ENCODE measurements at regions of chr18 and their contacts with region 1.

Region 1: DNA sequence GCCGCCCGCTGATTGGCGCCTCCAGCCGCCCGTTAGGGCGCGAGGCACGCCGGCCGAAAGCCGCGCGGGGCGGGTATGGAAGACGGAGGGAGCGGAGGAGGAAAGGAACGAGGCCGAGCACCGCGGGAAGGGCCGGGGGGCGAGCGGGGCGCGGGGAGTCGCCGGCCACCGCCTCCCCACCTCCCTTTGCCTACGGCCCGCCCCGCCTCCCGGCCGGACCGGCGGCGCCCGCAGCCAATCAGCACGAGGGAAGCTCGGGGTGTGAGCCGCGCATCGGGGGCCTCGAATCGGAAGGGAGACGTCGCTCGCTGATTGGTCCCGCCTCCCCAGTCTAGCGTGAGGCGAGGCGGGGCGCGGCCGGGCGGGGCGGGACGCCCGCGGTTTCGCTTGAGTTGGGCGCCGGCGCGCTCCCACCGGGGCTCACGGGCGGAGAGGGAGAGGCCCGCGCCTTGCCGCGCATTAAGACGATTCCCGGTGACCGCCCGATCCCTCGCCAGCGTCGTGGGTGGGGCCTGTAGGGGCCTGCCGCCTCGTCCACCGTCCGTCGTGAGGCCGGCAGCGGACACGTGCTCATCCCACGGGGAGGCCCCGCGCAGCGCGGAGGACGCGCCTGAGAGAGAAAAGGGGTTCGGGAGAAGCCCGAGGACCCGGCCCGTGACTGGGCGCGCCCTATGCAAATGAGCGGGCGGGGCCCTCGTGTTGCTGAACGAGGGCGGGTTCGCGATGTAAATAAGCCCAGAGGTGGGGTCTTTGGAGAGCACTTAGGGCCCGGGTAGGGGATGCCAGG is 665 bp upstream of the SMAD2 start:
- DNase-seq: peak; percentile 68 to 96
- ATAC-seq: peak; percentile 84 to 92
- H3K4me3 ChIP-seq: peak overlapping the region; percentile 87
- H3K27ac ChIP-seq: peak overlapping the region; percentile 98 to 100
- H3K4me1 ChIP-seq: peaks cover 35% of the 10 kb centered on the region
- CTCF ChIP-seq: no peak
- EP300 ChIP-seq: no peak
- POLR2A ChIP-seq: peak; percentile 65
- RAD21 ChIP-seq: no peak

Region 2: GRCh38 chr18:47912343-47912742 is 18.8 kb before region 1 on chr18:
- CTCF ChIA-PET with region 1: no interaction called
- POLR2A ChIA-PET with region 1: no interaction called
- DNase-seq: no peak
- ATAC-seq: peak in 1 of 2 experiments; percentile 23; a peak in 3 of 6 replicates
- H3K4me3 ChIP-seq: no peak overlapping the region
- H3K27ac ChIP-seq: peak overlapping the region; percentile 2 to 72; a peak in 3 of 6 replicates
- H3K4me1 ChIP-seq: peaks cover 94% of the 10 kb centered on the region
- CTCF ChIP-seq: no peak
- EP300 ChIP-seq: no peak
- POLR2A ChIP-seq: no peak
- RAD21 ChIP-seq: no peak

Region 3: GRCh38 chr18:48002933-48003365 is 71.8 kb after region 1 on chr18:
- CTCF ChIA-PET with region 1: interaction called, 13 read pairs
- POLR2A ChIA-PET with region 1: interaction called, 46 read pairs
- DNase-seq: peak; percentile 72 to 97
- ATAC-seq: peak; percentile 83 to 90
- H3K4me3 ChIP-seq: 0 out of 3 replicates have a peak overlapping the region, but pooled peaks have one; percentile 18
- H3K27ac ChIP-seq: peak overlapping the region; percentile 99
- H3K4me1 ChIP-seq: peaks cover 49% of the 10 kb centered on the region
- CTCF ChIP-seq: no peak
- EP300 ChIP-seq: peak; percentile 99 to 100
- POLR2A ChIP-seq: no peak; the same call in 1 of the 2 replicates
- RAD21 ChIP-seq: peak; percentile 15 to 57; a peak in 4 of 5 replicates

Measured in A549 (cell line).